Activated CD8-positive, alpha-beta memory T cell treated with anti-CD3 and anti-CD28 coated beads, Interleukin-2, amount 10 ng/mL, durations not matched to agents 7 days and 5 days (primary cell): ENCODE measurements at regions of chr6 and their contacts with region 1.

Region 1: DNA sequence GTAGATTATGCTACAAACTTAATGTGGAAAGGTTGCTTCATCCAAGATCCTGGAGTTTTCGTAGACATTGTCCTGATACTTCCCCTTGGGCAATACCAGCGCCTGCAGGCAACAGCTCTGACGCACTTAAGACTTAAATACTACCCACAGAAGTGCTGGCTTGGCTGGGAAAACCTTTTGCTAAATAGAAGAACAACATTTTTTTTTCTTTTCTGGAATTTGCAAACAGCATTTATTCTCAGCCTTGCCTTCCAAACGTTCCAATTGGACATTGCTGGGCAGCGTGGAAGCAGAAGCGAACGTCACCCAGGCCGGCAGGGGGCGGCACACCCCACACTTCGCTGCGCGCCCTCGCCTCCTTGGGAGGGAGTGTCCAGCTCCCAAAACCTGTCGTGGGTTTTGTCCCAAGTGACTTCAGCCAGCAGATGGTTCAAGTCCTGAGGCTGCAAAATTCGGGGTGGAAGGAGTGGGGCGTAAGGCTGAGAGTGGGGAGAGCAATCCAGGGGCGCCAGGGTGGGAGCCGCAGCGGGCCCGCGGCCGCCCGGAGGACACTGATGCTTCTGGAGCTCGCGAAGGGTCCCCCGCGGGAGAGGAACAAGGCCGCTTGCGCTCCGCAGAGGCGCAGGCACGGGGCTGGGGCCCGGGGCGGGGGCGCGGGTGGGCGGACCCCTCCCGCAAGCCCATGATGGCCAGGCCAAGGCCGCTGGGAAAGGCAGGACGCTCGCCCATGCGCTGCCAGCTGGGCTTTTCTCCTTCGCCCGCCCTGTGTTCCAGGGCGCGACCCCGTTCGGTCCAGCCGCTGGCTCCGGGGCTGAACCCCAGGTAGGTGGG is 60.8 kb upstream of the MAP3K4 start:
- DNase-seq: peak; percentile 56
- ATAC-seq: peak; percentile 69
- H3K4me3 Mint-ChIP-seq: no peak overlapping the region
- H3K27ac Mint-ChIP-seq: no peak overlapping the region
- H3K4me1 Mint-ChIP-seq: peaks cover 5% of the 10 kb centered on the region
- H3K27me3 Mint-ChIP-seq: peaks cover 45% of the 10 kb centered on the region

Region 2: DNA sequence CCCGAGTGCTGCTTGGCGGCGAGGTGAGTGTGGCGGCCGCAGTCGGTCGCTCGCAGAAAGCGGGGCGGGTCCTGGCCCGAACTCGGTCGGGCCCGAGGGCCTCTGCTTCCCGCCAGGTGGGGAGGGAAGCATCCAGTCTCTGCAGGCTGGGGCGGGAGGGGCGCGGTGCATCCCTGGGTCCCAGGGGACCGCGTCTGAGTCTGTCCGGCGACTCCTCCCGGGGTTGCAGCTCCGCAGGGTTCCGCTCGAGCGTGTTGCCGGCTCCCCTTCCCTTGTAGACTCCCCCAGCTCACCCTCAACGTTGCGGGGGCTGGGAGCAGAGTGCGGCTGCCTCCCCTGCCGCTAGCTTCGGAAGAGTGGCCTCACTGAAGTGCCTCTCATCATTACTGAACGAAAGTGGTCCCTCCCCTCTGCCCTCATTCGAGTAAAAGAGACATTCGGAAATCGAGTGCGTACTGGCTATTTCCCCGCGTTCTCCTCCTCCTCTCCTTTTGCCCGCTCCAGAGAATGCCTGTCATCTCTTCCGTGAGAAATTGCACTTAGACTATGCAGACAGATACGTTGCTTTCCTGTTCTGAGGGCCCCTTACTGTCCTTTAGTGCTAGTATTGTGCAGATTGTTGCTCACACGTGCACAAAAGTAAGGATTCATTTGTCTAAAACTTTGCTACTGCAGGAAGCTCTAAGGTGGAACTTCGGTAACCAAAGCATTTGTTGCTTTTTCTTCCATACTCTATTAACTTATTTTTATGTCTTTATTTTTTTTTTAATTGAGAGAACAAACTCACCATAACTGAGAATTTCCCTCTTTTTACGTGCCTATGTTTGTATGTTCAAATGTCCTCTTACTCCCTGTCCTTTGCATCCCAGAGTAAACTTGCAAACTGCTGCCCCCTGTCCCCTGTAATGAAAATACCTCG is 61.6 kb after region 1 on chr6:
- CTCF ChIA-PET with region 1: interaction called, 12 read pairs
- DNase-seq: peak; percentile 73
- ATAC-seq: peak; percentile 66
- H3K4me3 Mint-ChIP-seq: peak overlapping the region; percentile 92
- H3K27ac Mint-ChIP-seq: peak overlapping the region; percentile 83
- H3K4me1 Mint-ChIP-seq: peaks cover 26% of the 10 kb centered on the region
- H3K27me3 Mint-ChIP-seq: peaks cover 13% of the 10 kb centered on the region

Region 3: GRCh38 chr6:161076181-161076677 is 145.5 kb after region 1 on chr6:
- CTCF ChIA-PET with region 1: no interaction called
- DNase-seq: no peak
- ATAC-seq: no peak
- H3K4me3 Mint-ChIP-seq: no peak overlapping the region
- H3K27ac Mint-ChIP-seq: no peak overlapping the region
- H3K4me1 Mint-ChIP-seq: peaks cover 14% of the 10 kb centered on the region
- H3K27me3 Mint-ChIP-seq: no peaks in the 10 kb centered on the region